Prostate gland (tissue), 2 donors: ENCODE measurements at regions of chr5 and their contacts with region 1.

Region 1: GRCh38 chr5:35926389-35927051 is 11.9 kb downstream of the CAPSL start:
- DNase-seq: peak; percentile 42
- H3K4me3 ChIP-seq: no peak overlapping the region
- H3K27ac ChIP-seq: no peak overlapping the region
- H3K4me1 ChIP-seq: no peaks in the 10 kb centered on the region
- H3K27me3 ChIP-seq: no peaks in the 10 kb centered on the region
- CTCF ChIP-seq: peak; percentile 57 to 84 (median 81)
- POLR2A ChIP-seq: no peak

Region 2: DNA sequence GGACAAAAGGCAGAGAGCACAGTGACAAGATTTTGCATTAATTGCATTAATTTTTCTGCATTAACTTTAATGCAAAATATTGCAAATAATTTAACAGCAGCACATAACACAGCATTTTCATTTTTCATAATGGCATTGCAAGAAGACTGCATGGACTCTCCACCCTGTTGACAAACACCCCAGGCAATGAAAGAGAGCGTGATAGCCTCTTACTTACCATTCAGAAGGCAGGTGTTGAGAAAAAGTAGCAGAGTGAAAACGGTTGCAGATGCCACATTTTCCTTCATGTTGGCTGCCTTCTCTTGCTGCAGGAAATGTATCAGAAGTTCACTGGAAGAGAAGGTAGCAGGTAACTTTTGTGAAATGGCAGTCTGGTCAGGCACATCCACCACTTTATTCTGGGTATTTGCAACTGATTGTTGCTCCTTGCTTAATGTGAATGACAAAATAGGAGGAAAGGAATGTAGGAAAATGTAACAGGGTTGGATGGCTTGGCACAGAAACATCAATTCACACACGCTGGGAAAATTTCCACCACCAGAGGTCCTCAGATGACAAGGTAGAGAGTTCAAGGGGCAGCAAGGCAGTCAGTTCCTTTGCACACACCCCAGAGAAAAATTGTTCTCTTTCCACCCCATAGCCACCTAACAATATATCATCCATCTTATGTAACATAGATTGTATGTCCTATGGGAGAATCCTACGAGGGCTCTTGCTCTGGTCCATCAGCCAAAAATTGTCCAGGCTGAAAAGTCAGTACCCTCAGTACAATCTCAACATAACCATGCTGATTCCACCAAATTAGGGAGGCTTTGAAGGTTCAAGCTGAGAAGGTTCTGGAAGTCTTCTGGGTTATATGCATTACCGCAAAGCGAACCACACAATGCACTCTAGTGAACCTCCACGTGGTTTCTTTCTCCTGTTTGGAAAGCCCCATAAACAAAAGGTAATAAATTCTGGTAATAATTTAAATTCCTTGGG is 836.9 kb before region 1 on chr5:
- intact Hi-C with region 1: loop called (anchors 2 kb)
- DNase-seq: peak; percentile 35
- H3K4me3 ChIP-seq: no peak overlapping the region
- H3K27ac ChIP-seq: no peak overlapping the region
- H3K4me1 ChIP-seq: no peaks in the 10 kb centered on the region
- H3K27me3 ChIP-seq: no peaks in the 10 kb centered on the region
- CTCF ChIP-seq: peak in 3 of 4 experiments; percentile 65 to 75 (median 74)
- POLR2A ChIP-seq: no peak

Region 3: DNA sequence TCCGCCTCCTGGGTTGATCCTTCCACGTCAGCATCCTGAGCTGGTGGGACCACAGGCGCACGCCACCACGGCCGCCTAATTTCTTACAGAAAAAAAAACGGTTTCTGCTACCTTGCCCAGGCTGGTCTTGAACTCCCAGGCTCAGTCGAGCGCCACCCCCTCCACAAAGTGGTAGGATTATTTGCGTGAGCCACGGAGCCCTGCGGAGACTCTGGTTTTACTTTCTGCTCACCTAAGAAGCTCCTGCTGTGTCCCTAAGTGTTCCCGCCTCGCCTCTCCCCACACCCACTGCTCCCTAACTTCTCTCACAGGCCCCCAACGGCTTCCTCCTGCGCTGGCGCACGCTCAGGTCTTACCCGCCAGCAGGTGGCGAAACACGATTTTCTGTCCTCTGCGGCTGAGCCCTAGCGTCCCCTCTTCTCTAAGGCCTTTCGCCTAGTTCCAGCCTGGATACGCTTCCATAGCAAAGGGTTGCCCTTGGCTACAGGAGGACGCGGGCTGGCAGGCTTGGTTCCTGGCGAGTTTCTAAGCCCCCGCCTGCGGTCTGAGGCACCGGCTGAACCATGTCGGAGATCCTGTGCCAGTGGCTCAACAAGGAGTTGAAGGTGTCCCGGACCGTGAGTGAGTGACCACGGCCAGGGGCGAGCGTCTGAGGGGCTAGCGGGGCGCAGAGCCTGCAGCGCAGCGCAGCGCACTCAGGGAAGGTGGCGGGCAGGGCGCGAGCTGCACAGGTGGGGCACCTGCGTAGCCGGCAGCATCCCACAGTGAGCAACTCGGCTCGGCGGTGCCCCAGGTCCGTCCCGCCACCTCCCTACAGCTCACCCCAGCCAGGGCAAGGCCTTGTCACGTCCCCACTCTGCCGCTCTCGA is 308.9 kb before region 1 on chr5 and contains the start of gene SPEF2:
- intact Hi-C with region 1: loop called (anchors 2 kb)
- DNase-seq: peak; percentile 72
- H3K4me3 ChIP-seq: peak within 1 kb of the TSS; percentile 48 to 64
- H3K27ac ChIP-seq: peak within 1 kb of the TSS; percentile 12 to 16
- H3K4me1 ChIP-seq: no peaks in the 10 kb centered on the region
- H3K27me3 ChIP-seq: no peaks in the 10 kb centered on the region
- CTCF ChIP-seq: peak; percentile 45 to 75 (median 64)
- POLR2A ChIP-seq: no peak
- total RNA-seq, gene SPEF2: 2.4 to 7.9 TPM

Region 4: DNA sequence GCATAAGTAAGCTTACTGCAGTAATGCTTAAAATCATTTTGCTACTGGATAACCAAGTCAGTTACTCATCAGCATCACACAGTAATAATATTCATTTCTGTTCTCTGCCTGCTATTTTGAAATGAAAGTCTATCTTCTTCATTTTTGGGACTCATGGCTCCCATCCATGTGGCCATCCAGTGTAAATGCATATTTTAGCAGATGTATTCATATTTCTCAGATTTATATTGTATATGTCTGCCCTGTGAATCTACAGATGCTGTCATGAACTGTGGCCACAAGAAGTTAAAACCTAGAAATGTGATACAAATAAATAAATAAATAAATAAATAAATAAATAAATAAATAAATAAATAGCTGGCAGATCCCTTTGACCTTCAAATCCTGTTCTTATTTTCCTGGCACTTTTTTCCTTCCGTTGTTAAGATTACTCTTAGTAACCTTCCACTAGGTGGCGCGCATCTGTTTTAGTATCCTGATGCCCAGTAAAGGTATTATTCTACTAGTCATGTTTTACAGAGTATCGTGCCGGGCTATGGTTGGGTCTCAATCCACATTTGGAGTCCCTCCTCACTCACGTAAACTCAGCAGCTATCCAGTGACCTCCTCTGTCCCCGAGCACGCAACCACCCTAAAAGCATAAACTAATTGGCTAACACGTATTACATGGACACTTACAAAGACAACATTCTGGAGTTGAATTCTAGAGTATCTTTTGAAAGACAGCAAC is 149.0 kb before region 1 on chr5:
- intact Hi-C with region 1: loop called (anchors 5 kb)
- DNase-seq: peak; percentile 76
- H3K4me3 ChIP-seq: no peak overlapping the region
- H3K27ac ChIP-seq: no peak overlapping the region
- H3K4me1 ChIP-seq: no peaks in the 10 kb centered on the region
- H3K27me3 ChIP-seq: no peaks in the 10 kb centered on the region
- CTCF ChIP-seq: peak; percentile 26 to 60 (median 54)
- POLR2A ChIP-seq: no peak

Region 5: DNA sequence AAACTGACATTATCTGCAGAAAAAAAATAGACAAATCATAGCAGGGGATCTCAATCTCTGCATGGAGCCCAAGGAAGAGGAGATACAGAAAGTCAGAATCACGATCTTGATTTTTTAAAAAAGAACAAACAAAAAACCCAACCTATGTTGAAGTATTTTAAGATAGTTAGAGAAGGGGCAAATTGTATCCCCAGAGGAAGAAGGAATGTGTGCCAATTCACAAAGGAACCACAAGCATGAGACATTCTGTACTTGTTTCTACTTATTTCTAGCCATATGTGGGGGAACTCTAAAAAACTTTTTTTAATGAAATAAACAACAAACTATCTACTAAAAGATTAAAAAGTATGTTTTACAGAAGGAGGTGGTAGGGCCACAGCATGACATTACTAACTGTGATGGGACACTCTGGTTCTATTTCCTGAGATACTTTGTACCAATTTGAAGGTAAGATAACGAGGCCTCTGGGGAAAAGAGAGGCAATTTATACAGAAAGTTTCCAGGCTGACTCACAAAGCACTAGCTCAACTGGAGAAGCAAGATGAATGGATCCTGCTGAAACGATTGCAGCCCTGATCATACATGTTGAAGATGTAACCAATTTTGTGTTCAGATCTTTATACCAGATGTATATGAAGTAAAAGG is 352.7 kb after region 1 on chr5:
- intact Hi-C with region 1: no loop called
- DNase-seq: no peak
- H3K4me3 ChIP-seq: no peak overlapping the region
- H3K27ac ChIP-seq: peak overlapping the region in 1 of 2 donors; percentile 29
- H3K4me1 ChIP-seq: no peaks in the 10 kb centered on the region
- H3K27me3 ChIP-seq: no peaks in the 10 kb centered on the region
- CTCF ChIP-seq: no peak
- POLR2A ChIP-seq: no peak